Right ventricle myocardium inferior (tissue), 1 donor: ENCODE measurements at regions of chr12 and their contacts with region 1.

Region 1: GRCh38 chr12:56521590-56522371 is at the start of gene RBMS2:
- DNase-seq: peak; percentile 74
- ATAC-seq: peak; percentile 98
- total RNA-seq, gene RBMS2: 30.2 TPM

Region 2: GRCh38 chr12:56248688-56249087 is 273.1 kb before region 1 on chr12:
- intact Hi-C with region 1: no loop called
- DNase-seq: peak; percentile 16
- ATAC-seq: no peak

Region 3: GRCh38 chr12:56565510-56566101 is 43.8 kb after region 1 on chr12:
- intact Hi-C with region 1: loop called (anchors 1 kb)
- DNase-seq: peak; percentile 88
- ATAC-seq: peak; percentile 92

Region 4: DNA sequence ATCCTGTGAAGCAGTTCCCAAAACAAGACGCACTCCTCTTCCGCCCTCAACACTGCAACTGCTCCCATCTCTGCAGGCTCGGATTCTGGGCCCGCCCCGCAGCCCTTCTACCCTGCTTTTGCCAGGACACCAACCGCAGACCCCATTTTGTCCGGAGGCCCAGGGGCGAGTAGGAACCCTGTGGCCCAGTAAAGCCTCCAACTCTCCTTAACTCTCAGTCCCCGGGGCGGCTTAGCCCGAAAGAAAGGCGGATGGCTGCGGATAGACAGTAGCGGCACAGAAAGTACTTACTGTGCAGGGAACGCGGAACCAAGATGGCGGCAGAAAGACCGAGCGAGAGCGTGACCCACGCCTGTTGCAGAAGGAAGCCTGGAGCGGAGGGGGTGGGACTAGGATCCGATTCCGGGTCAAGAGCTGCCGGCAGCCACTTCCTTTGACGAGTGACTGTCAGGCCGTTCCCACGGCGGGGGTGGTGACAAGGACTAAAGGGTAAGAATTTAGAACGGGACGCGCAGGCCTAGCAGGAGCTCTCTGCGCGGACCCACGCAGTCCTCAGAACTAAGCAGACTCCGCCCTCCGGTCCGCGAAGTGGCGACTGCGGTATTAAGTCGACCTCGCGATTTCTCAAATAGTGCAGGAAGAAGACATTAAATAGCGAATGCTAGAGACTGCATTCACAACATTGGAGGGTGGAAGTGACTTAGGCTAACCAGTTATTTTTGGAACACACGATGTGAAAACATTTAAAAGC is 203.4 kb after region 1 on chr12 and contains the start of gene NACA:
- intact Hi-C with region 1: no loop called
- DNase-seq: peak; percentile 100
- ATAC-seq: peak; percentile 96
- total RNA-seq, gene NACA: 432 TPM

Region 5: GRCh38 chr12:56987551-56988053 is 465.8 kb after region 1 on chr12:
- intact Hi-C with region 1: loop called (anchors 10 kb)
- DNase-seq: peak; percentile 93
- ATAC-seq: peak; percentile 82